ENCODE measurements at regions of chr2 and their contacts with region 1.

Region 1: GRCh38 chr2:201451292-201452057 is at the starts of genes STRADB and TRAK2:
- DNase-seq: peak; percentile 99
- total RNA-seq, gene STRADB: 41.5 TPM
- total RNA-seq, gene TRAK2: 259 TPM

Region 2: GRCh38 chr2:201260302-201260800 is 191.1 kb before region 1 on chr2 and contains the start of gene CASP8:
- intact Hi-C with region 1: loop called (anchors 10 kb)
- DNase-seq: peak; percentile 87
- total RNA-seq, gene CASP8: 4.5 TPM

Region 3: DNA sequence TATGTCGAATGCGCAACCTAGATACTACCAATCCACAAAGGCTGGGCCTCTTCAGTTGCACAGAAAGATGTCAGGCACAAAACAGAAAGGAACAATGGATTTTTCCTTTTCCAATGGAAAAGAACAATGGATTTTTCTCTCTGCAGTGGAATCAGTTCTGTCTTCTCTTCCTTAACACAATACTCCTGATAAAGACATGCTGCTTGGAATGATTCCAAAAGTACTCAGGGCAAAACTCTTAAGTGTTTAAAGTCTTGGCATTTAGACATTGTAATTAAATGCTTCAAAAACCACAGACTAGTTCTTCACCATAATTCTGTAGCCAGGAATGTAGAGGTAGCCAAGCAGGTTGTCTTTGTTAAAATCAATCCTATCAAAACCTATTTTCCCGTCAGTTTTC is 47.6 kb before region 1 on chr2:
- intact Hi-C with region 1: loop called (anchors 2 kb)
- DNase-seq: no peak

Region 4: GRCh38 chr2:201432038-201432620 is 19.3 kb before region 1 on chr2:
- intact Hi-C with region 1: loop called (anchors 2 kb)
- DNase-seq: no peak

Measured in cardiac septum (tissue), 1 donor.